ENCODE measurements at regions of chr6 and their contacts with region 1.

Region 1: DNA sequence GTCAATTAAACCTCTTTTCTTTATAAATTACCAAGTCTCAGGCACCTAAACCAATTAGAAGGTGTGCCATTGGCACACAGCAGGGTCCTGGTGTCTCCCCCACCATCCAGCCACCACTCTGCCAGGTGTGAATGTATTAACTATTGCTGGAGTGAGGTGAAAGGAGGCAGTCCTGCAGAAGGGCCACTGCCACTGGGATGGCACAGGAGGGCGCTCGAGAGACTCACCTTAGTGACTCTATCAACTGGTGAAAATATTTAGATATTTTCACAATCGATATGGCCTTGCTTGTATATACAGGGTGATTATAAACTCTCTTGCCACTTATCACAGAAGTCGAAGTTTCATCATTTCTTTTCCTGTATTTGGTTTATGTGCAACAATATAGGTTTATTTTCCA is 145.6 kb upstream of the ESR1 start:
- DNase-seq: no peak
- H3K4me3 Mint-ChIP-seq: no peak overlapping the region
- H3K27ac Mint-ChIP-seq: no peak overlapping the region
- H3K4me1 Mint-ChIP-seq: no peaks in the 10 kb centered on the region
- H3K27me3 Mint-ChIP-seq: no peaks in the 10 kb centered on the region
- CTCF ChIP-seq: no peak

Region 2: GRCh38 chr6:151451950-151452749 is 209.8 kb before region 1 on chr6 and contains the start of gene RMND1:
- CTCF ChIA-PET with region 1: no interaction called
- intact Hi-C with region 1: loop called (anchors 10 kb)
- DNase-seq: peak; percentile 96
- H3K4me3 Mint-ChIP-seq: peak within 1 kb of the TSS; percentile 84
- H3K27ac Mint-ChIP-seq: peak within 1 kb of the TSS; percentile 89
- H3K4me1 Mint-ChIP-seq: peaks cover 7% of the 10 kb centered on the region
- H3K27me3 Mint-ChIP-seq: no peaks in the 10 kb centered on the region
- CTCF ChIP-seq: no peak
- total RNA-seq, gene RMND1: 13.2 and 15.5 TPM in 2 replicates